ENCODE measurements at regions of chr10 and their contacts with region 1.

Region 1: DNA sequence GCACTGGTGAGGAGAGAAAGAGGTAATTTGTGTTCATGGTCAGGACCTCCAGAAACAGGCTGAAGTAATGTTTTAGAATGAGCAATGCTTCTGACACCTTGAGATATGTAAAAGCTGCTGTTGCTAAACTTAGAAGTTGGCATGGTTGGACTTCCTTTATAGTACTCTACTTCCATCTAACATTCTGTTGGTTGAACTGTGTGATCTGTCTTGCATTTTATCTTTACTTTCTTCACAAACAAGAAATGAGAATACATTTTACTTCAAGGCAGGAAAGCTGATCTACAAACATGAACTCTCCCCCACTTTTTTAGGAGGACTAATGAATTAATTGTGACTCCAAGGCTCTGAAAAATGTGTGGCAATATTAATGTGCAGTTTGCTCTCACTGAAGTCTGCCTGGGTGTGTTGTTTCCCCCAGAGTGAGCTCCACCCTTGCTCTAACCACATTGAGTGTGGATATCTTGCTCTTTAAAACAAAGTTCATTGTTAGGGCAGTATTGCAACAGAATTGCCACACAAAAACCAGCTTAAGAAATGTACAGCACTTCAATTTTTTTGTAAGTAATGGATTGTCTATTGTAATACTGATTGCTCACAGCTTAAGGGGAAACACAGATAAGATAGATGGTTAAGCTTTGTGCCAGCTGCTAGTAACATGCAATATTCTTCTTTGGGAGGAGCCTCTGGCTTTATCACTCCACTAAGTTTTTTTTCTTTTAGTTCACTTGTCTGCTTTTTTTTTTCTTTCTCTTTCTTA is 69.0 kb downstream of the ADD3 start:
- DNase-seq: peak; percentile 49
- H3K4me3 ChIP-seq: no peak overlapping the region
- CTCF ChIP-seq: no peak

Region 2: DNA sequence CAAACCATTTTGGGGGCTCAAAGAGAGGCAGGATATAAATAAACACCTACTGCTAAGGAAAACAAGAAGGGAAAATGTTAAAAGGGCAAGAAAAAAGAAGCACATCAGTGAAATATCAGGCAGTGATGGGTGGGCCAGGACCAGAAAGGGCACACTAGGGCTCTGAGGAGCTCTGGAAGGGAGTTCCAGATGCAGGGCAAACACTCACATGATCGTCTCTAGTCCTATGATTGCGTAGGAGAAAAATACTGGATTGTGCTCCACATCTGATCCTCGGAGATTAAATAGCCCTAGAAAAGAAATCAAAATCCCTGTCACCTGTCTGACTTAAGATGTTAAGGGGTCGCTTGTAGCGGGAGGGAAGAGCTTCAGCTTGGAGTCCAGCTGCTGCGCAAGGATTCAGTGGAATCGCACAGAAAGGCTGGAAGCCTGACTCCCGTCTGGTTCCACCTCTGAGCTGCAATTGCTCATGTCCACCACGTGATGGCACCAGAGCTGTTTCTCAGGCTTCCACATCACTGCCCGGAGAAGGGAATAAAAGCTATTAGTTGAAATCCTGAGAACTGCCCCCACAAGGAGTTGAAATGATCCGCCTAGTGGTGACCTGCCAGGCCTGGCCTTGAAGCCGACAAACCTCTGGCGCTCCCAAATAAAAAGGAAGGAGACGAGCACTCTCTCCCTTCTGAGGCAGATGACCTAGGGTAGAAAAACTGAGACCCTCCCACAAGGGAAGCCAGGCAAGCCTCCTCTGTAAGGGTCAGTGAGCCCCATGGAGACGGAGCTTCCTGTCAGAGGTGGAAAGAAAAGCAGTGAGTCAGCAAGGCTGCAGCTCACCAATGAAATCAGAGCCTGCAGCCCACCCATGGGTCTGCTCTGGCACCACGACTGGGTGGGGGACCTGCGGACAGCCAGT is 192.6 kb before region 1 on chr10:
- in situ Hi-C with region 1: loop called (anchors 25 kb)
- DNase-seq: peak; percentile 88
- H3K4me3 ChIP-seq: no peak overlapping the region
- CTCF ChIP-seq: peak; percentile 97

Region 3: GRCh38 chr10:110110338-110110737 is 33.6 kb after region 1 on chr10:
- in situ Hi-C with region 1: no loop called
- DNase-seq: no peak
- H3K4me3 ChIP-seq: no peak overlapping the region
- CTCF ChIP-seq: no peak